A673 (cell line): ENCODE measurements at regions of chr2 and their contacts with region 1.

Region 1: DNA sequence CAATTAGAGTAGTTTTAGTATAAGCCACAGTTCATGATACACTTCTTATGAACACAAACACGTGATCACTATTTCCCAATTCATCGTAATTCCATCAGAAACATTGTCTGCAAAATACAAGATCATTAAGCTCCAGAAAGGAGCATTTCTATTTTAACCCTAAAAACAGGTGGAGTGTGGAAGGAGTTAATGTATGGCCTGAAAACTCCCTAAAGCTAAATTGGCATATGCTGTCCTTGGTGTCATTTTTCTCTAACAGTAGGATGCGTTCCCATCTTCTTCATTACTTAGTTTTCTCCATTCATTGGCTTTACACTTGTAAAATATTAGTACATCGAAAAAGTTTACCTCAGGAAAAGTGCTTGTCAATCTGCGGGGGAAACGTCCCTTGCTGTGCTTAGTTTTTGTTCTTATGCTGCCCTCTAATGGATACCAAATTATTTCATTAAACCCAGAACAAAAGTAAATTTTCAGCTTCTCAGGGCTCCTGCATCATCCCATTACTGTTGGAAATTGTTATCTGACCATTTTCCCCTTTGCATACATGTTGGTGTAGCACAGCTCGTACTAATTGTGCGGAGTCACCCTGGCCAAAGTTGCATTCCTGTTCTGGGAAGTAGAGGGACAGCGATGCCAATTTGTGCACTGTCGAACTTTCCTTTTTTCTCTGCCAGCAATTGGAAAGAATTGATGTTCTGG is 153.4 kb downstream of the GPD2 start:
- DNase-seq: peak; percentile 56
- H3K4me3 ChIP-seq: no peak overlapping the region
- H3K27ac ChIP-seq: no peak overlapping the region
- H3K4me1 ChIP-seq: no peaks in the 10 kb centered on the region
- H3K27me3 ChIP-seq: no peaks in the 10 kb centered on the region
- CTCF ChIP-seq: peak; percentile 61

Region 2: GRCh38 chr2:155368934-155369333 is 1220.6 kb before region 1 on chr2:
- CTCF ChIA-PET with region 1: no interaction called
- POLR2A ChIA-PET with region 1: no interaction called
- intact Hi-C with region 1: loop called (anchors 2 kb)
- DNase-seq: peak; percentile 17
- H3K4me3 ChIP-seq: no peak overlapping the region
- H3K27ac ChIP-seq: no peak overlapping the region
- H3K4me1 ChIP-seq: no peaks in the 10 kb centered on the region
- H3K27me3 ChIP-seq: no peaks in the 10 kb centered on the region
- CTCF ChIP-seq: peak; percentile 40

Region 3: DNA sequence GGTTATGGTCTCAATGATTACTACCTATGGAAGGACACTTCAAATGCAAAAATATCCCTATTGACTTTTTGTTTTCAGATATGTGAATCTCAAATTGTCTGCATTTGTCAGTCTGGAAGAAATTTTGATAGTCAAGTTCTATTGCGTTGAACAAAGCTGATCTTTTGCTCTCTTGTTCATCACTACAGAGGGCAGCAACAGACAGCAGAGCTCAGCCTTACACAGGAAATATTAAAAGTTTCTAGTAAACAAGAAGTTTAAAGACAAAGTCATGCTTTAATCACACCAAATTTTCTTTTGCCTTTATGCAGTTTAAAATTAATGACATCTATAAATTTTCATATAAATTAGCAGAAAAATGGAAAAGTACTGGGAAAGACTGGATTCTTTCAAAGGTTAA is 874.5 kb before region 1 on chr2:
- CTCF ChIA-PET with region 1: no interaction called
- POLR2A ChIA-PET with region 1: no interaction called
- intact Hi-C with region 1: loop called (anchors 10 kb)
- DNase-seq: no peak
- H3K4me3 ChIP-seq: no peak overlapping the region
- H3K27ac ChIP-seq: no peak overlapping the region
- H3K4me1 ChIP-seq: no peaks in the 10 kb centered on the region
- H3K27me3 ChIP-seq: no peaks in the 10 kb centered on the region
- CTCF ChIP-seq: no peak

Region 4: GRCh38 chr2:156332534-156333273 is 256.8 kb before region 1 on chr2 and contains the start of gene NR4A2:
- CTCF ChIA-PET with region 1: interaction called, 7 read pairs
- POLR2A ChIA-PET with region 1: no interaction called
- intact Hi-C with region 1: loop called (anchors 1 kb)
- DNase-seq: peak; percentile 87
- H3K4me3 ChIP-seq: peak within 1 kb of the TSS; percentile 79
- H3K27ac ChIP-seq: peak within 1 kb of the TSS; percentile 91
- H3K4me1 ChIP-seq: peaks cover 20% of the 10 kb centered on the region
- H3K27me3 ChIP-seq: no peaks in the 10 kb centered on the region
- CTCF ChIP-seq: no peak
- total RNA-seq, gene NR4A2: 1.1 and 1.8 TPM in 2 replicates

Region 5: GRCh38 chr2:156892467-156893281 is 303.1 kb after region 1 on chr2:
- CTCF ChIA-PET with region 1: no interaction called
- POLR2A ChIA-PET with region 1: no interaction called
- intact Hi-C with region 1: loop called (anchors 5 kb)
- DNase-seq: peak; percentile 61
- H3K4me3 ChIP-seq: peak overlapping the region; percentile 26
- H3K27ac ChIP-seq: no peak overlapping the region
- H3K4me1 ChIP-seq: no peaks in the 10 kb centered on the region
- H3K27me3 ChIP-seq: peaks cover 14% of the 10 kb centered on the region
- CTCF ChIP-seq: peak; percentile 67

Region 6: DNA sequence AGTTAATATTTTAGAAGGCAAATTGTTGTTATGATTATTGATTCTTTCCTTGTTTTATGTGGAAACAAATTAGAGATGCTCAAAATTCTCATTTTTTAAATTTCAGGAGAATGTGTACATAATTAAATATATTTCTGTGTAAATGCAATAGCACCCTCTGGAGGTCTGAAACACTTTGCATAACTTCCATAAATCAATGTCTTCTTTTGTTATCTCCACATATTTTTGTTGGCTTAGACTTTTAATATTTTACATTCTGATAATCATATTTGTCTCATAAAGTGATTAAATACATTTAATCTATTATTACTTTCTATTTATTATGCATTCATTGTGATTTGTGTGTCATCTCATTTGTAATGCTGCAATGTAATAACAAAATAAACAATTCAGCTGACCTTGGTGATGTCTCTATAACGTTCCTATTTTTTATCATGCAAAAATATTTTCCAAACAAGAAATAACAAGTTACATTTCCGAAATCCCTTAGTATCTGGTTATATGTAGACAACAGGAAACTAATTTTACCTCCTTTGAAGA is 466.2 kb after region 1 on chr2:
- CTCF ChIA-PET with region 1: no interaction called
- POLR2A ChIA-PET with region 1: no interaction called
- intact Hi-C with region 1: loop called (anchors 10 kb)
- DNase-seq: peak; percentile 54
- H3K4me3 ChIP-seq: no peak overlapping the region
- H3K27ac ChIP-seq: no peak overlapping the region
- H3K4me1 ChIP-seq: peaks cover 5% of the 10 kb centered on the region
- H3K27me3 ChIP-seq: no peaks in the 10 kb centered on the region
- CTCF ChIP-seq: peak; percentile 67

Region 7: DNA sequence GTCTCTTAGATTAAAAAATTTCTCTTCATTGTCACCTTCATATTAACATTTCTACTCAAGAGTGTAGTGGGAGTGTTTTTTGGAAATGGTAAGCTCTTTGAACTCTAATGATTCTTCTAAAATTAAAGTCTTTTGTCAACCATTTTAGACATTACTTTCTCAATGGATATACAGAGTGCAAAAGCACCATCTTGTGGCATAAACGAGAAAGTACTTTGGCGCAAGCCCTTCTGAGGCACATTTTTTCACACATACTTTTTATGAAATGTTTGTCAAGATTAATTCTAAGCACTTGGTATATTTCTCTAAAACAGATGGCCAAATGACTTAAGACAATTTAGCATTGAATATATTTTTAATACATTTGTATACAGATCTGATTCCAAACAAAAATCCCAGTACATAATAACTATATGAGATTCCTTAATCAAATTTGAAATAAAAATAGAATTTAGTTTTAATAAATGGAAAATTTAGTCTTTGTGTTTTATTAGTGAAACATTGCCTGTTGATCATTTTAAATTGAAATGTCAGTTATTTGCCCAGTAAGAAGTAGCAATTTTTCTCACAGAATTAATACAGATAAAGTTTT is 604.7 kb after region 1 on chr2:
- CTCF ChIA-PET with region 1: no interaction called
- POLR2A ChIA-PET with region 1: no interaction called
- intact Hi-C with region 1: loop called (anchors 5 kb)
- DNase-seq: peak; percentile 71
- H3K4me3 ChIP-seq: no peak overlapping the region
- H3K27ac ChIP-seq: no peak overlapping the region
- H3K4me1 ChIP-seq: no peaks in the 10 kb centered on the region
- H3K27me3 ChIP-seq: no peaks in the 10 kb centered on the region
- CTCF ChIP-seq: peak; percentile 82